ENCODE measurements at regions of chr9 and their contacts with region 1.

Region 1: GRCh38 chr9:2181792-2182191 is 166.6 kb downstream of the SMARCA2 start:
- DNase-seq: no peak
- ATAC-seq: no peak
- H3K4me3 Mint-ChIP-seq: no peak overlapping the region
- H3K27ac Mint-ChIP-seq: no peak overlapping the region
- H3K4me1 Mint-ChIP-seq: no peaks in the 10 kb centered on the region
- H3K27me3 Mint-ChIP-seq: no peaks in the 10 kb centered on the region

Region 2: GRCh38 chr9:2170712-2171111 is 11.1 kb before region 1 on chr9:
- CTCF ChIA-PET with region 1: interaction called, 13 read pairs
- POLR2A ChIA-PET with region 1: no interaction called
- DNase-seq: no peak
- ATAC-seq: no peak
- H3K4me3 Mint-ChIP-seq: no peak overlapping the region
- H3K27ac Mint-ChIP-seq: no peak overlapping the region
- H3K4me1 Mint-ChIP-seq: no peaks in the 10 kb centered on the region
- H3K27me3 Mint-ChIP-seq: no peaks in the 10 kb centered on the region

Region 3: DNA sequence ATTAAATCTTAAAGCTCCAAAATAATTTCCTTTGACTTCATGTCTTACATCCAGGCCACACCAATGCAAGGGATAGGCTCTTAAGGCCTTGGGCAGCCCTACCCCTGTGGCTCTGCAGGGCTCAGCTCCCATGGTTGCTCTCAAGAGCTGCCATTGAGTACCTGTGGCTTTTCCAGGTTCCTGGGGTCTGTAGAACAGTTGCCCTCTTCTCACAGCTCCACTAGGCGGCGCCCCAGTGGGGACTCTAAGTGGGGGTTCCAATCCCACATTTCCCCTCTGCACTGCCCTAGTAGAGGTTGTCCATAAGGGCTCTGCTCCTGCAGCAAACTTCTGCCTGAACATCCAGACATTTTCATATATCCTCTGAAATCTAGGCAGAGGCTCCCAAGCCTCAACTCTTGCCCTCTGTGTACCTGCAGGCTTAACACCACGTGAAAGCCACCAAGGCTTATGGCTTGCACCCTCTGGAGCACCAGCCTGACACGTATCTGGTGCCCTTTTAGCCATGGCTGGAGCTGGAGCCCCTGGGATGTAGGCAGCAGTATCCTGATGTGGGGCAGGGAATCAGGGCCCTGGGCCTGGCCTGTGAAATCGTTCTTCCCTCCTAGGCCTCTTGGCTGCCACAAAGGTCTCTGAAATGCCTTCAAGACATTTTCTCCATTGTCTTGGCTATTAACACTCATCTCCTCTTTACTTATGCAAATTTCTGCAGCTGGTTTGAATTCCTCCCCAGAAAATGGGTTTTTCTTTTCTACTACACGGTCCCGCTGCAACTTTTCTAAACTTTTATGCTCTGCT is 18.4 kb after region 1 on chr9:
- CTCF ChIA-PET with region 1: no interaction called
- POLR2A ChIA-PET with region 1: no interaction called
- DNase-seq: no peak
- ATAC-seq: no peak
- H3K4me3 Mint-ChIP-seq: no peak overlapping the region
- H3K27ac Mint-ChIP-seq: peak overlapping the region; percentile 48
- H3K4me1 Mint-ChIP-seq: peaks cover 2% of the 10 kb centered on the region
- H3K27me3 Mint-ChIP-seq: no peaks in the 10 kb centered on the region